ENCODE measurements at regions of chr19 and their contacts with region 1.

Region 1: GRCh38 chr19:52248241-52248640 is 21.1 kb upstream of the ZNF766 start:
- DNase-seq: peak; percentile 60
- ATAC-seq: peak; percentile 73
- H3K4me3 ChIP-seq: no peak overlapping the region
- H3K27ac ChIP-seq: no peak overlapping the region
- H3K4me1 ChIP-seq: no peaks in the 10 kb centered on the region
- H3K27me3 ChIP-seq: no peaks in the 10 kb centered on the region
- CTCF ChIP-seq: peak; percentile 65

Region 2: GRCh38 chr19:52748336-52748950 is 500.2 kb after region 1 on chr19:
- CTCF ChIA-PET with region 1: no interaction called
- POLR2A ChIA-PET with region 1: no interaction called
- intact Hi-C with region 1: loop called (anchors 1 kb)
- DNase-seq: peak; percentile 67
- ATAC-seq: peak; percentile 62
- H3K4me3 ChIP-seq: no peak overlapping the region
- H3K27ac ChIP-seq: no peak overlapping the region
- H3K4me1 ChIP-seq: no peaks in the 10 kb centered on the region
- H3K27me3 ChIP-seq: no peaks in the 10 kb centered on the region
- CTCF ChIP-seq: peak; percentile 73